ENCODE measurements at regions of chr10 and their contacts with region 1.

Region 1: GRCh38 chr10:110610308-110610774 is 33.8 kb upstream of the RBM20 start:
- DNase-seq: peak; percentile 75
- H3K4me3 Mint-ChIP-seq: no peak overlapping the region
- H3K27ac Mint-ChIP-seq: no peak overlapping the region
- H3K4me1 Mint-ChIP-seq: peaks cover 26% of the 10 kb centered on the region
- H3K27me3 Mint-ChIP-seq: no peaks in the 10 kb centered on the region

Region 2: GRCh38 chr10:110036640-110037039 is 573.7 kb before region 1 on chr10:
- CTCF ChIA-PET with region 1: no interaction called
- intact Hi-C with region 1: no loop called
- DNase-seq: no peak
- H3K4me3 Mint-ChIP-seq: no peak overlapping the region
- H3K27ac Mint-ChIP-seq: peak overlapping the region; percentile 91
- H3K4me1 Mint-ChIP-seq: peaks cover 91% of the 10 kb centered on the region
- H3K27me3 Mint-ChIP-seq: no peaks in the 10 kb centered on the region

Region 3: DNA sequence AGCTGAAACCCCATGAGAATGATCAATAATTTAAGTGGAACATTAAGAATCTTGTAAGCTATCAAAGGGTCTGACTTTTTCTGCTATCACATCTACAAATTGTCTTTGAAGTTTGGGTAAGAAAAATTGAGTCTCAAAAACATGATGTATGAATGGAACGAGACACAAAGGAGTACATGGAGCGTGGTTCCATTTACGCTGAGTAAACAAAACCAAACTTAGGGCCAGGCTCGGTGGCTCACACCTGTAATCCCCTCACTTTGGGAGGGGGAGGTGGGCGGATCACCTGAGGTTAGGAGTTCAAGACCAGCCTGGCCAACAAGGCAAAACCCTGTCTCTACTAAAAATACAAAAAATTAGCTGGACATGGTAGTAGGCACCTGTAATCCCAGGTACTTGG is 18.6 kb before region 1 on chr10:
- CTCF ChIA-PET with region 1: interaction called, 7 read pairs
- intact Hi-C with region 1: loop called (anchors 2 kb)
- DNase-seq: no peak
- H3K4me3 Mint-ChIP-seq: no peak overlapping the region
- H3K27ac Mint-ChIP-seq: no peak overlapping the region
- H3K4me1 Mint-ChIP-seq: peaks cover 2% of the 10 kb centered on the region
- H3K27me3 Mint-ChIP-seq: no peaks in the 10 kb centered on the region

Region 4: DNA sequence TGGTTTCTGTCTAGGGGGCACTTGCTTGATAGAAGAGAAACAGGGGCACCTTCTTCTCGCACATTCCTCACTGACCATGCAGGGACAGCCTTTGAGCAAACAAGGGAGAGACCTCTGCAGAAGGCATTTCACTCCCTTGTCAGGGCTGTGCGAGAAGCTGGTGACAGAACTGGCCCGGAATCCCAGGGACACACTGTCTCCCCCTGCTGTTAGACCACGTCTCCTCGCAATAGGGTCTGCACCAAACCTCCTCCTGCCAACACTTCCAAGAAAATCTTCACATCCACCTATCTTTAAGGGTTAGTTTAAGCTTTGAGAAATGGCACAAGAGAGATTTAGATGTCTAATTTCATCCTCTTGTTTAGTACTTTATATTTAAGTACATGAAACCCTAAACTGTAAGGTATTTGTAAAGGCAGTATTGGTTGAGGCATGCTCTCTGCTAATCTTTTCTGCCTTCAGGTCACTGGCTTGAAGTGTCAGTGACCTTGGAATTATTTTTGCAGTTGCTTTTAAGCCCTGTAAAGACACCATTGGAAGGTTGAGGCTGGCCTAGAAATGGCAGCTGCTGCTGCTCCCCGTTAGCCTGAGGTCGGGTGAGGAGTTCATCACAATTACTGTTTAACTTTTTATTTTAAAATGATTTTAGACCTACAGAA is 70.8 kb after region 1 on chr10:
- CTCF ChIA-PET with region 1: interaction called, 14 read pairs
- intact Hi-C with region 1: loop called (anchors 1 kb)
- DNase-seq: peak; percentile 51
- H3K4me3 Mint-ChIP-seq: no peak overlapping the region
- H3K27ac Mint-ChIP-seq: no peak overlapping the region
- H3K4me1 Mint-ChIP-seq: peaks cover 4% of the 10 kb centered on the region
- H3K27me3 Mint-ChIP-seq: peaks cover 2% of the 10 kb centered on the region

Region 5: DNA sequence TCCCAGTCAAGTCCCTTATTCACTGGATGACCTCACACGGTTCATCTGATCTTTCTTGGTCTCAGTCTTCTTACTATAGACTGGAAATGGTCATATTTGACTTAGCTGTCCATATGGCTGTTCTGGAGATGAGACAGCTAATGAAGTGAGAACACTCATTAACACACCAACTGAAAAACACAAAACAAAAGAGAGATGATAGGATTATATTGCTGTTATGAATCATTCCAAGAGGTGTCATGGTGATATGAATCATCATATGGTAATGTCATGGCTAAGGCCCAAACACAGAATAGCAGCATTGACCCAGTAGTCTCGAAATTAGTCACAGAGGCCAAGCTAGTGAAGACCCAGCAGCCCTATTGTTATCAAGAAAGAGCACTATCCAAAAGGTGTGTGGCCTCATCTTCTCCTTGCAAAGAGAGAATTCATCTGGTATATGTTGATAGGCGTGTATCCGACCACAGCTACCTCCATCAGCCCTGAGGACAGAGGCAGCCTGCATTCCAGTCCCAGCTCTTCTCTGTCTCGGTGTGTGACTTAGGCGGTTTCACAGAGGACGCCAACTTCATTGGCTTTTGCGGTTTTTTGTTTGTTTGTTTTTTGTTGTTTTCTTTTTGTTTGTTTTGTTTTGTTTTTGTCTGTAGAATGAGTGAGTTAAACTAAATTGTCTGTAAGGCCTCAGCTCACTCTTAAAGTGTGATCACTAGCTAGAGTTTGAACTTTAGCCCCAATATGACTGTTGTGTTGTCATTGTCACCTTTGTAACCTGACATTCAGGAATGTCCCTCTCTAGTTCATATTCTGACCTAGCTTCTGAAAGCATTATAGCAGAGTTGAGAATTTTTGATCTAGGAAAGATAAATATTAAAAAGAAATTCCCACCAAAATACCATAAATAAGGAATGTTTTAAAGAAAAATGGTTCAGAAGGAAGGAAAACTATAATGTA is 164.0 kb after region 1 on chr10:
- CTCF ChIA-PET with region 1: no interaction called
- intact Hi-C with region 1: loop called (anchors 1 kb)
- DNase-seq: peak; percentile 66
- H3K4me3 Mint-ChIP-seq: no peak overlapping the region
- H3K27ac Mint-ChIP-seq: peak overlapping the region; percentile 77
- H3K4me1 Mint-ChIP-seq: peaks cover 47% of the 10 kb centered on the region
- H3K27me3 Mint-ChIP-seq: no peaks in the 10 kb centered on the region

Region 6: GRCh38 chr10:110993024-110993693 is 382.8 kb after region 1 on chr10:
- CTCF ChIA-PET with region 1: no interaction called
- intact Hi-C with region 1: loop called (anchors 5 kb)
- DNase-seq: peak; percentile 21
- H3K4me3 Mint-ChIP-seq: no peak overlapping the region
- H3K27ac Mint-ChIP-seq: no peak overlapping the region
- H3K4me1 Mint-ChIP-seq: peaks cover 23% of the 10 kb centered on the region
- H3K27me3 Mint-ChIP-seq: no peaks in the 10 kb centered on the region

Region 7: GRCh38 chr10:111360260-111360925 is 750.1 kb after region 1 on chr10:
- CTCF ChIA-PET with region 1: no interaction called
- intact Hi-C with region 1: loop called (anchors 1 kb)
- DNase-seq: peak; percentile 35
- H3K4me3 Mint-ChIP-seq: no peak overlapping the region
- H3K27ac Mint-ChIP-seq: no peak overlapping the region
- H3K4me1 Mint-ChIP-seq: no peaks in the 10 kb centered on the region
- H3K27me3 Mint-ChIP-seq: peaks cover 13% of the 10 kb centered on the region

Region 8: DNA sequence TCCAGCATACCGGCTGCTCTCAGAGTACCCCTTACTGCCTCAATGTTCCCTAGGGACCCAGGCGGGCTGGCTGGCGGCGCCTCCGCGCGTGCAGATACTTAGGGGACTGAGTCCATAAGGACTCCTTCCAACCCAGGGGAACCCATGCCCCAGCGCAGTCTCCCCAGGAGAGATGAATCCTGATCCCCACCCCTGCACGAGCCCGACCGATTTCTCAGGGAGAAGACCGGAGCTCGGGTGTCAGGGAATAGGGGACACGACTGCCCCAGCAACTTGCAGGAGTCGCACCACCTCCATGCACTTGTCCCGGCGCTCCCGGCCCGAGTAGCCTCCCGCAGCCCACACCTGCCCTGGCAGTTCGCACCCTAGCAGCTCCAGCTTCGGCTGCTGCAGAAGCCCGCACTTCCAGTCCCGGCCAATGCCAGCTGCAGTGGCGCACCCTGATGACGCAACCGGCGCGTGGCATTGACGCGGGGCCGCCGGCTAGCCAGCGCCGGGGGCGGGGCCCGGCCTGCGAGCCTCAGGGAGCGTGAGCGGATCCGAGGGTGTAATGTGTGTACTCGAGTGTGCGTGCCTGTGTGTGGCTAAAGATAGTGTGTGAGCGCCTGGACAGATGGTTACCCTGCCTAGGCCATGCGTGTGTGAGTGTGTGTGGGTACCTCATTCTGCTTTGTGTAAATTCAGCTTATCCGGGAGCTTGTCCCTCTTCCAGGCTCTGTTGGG is 1573.1 kb after region 1 on chr10 and contains the start of gene GPAM:
- CTCF ChIA-PET with region 1: no interaction called
- intact Hi-C with region 1: loop called (anchors 1 kb)
- DNase-seq: peak; percentile 97
- H3K4me3 Mint-ChIP-seq: peak within 1 kb of the TSS; percentile 85
- H3K27ac Mint-ChIP-seq: peak within 1 kb of the TSS; percentile 74
- H3K4me1 Mint-ChIP-seq: peaks cover 20% of the 10 kb centered on the region
- H3K27me3 Mint-ChIP-seq: no peaks in the 10 kb centered on the region
- total RNA-seq, gene GPAM: 7.3 to 8.1 TPM

Measured in activated naive CD4-positive, alpha-beta T cell treated with anti-CD3 and anti-CD28 coated beads for 36 hours (primary cell).